Activated CD4-positive, alpha-beta T cell treated with anti-CD3 and anti-CD28 coated beads, Interleukin-2, amount 10 ng/mL, durations not matched to agents 24 days and 14 days (primary cell): ENCODE measurements at regions of chr19 and their contacts with region 1.

Region 1: DNA sequence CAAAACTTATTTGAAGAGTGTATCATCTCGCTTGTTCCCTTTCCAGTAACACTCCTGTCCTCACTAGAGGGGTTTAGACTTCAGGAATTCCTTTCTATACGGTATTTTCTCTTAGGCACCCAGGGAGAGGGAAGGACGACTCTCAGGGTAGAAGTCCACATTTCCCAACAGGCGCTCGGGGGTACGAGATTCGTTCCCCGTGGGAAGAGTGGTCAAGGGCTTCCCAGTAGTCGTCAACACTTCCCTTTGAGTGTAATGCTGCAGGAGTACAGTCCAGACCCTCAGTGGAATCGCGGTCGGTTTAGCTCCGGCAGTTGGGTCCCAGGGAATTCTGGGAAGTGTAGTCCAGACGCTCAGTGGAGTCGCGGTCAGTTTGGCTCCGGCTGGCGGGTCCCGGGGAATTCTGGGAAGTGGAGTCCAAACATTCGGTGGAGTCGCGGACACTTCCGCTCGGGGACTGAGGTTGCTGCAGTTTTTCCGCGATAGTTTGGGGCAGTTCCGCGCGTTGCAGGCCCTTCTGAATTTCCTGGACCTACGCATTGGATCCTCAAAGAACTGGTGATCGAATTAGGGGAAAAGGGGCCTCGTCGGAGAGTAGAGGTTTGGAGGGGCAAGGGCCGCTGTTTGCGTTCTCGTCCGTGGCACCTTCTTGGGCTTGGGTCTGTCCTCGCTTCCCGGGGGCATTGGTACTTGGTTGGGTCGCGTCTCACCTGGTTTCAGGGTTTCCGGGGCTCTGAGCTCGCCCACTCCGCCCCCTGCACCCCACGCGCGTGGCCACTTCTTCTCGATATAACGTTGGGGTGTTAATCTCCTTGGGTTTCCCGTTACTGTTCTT is at the start of gene ZNF224:
- DNase-seq: peak; percentile 94
- H3K4me3 Mint-ChIP-seq: peak within 1 kb of the TSS; percentile 98
- H3K27ac Mint-ChIP-seq: peak within 1 kb of the TSS; percentile 91
- H3K4me1 Mint-ChIP-seq: peaks cover 14% of the 10 kb centered on the region
- H3K27me3 Mint-ChIP-seq: no peaks in the 10 kb centered on the region
- total RNA-seq, gene ZNF224: 17.0 and 17.4 TPM in 2 replicates

Region 2: DNA sequence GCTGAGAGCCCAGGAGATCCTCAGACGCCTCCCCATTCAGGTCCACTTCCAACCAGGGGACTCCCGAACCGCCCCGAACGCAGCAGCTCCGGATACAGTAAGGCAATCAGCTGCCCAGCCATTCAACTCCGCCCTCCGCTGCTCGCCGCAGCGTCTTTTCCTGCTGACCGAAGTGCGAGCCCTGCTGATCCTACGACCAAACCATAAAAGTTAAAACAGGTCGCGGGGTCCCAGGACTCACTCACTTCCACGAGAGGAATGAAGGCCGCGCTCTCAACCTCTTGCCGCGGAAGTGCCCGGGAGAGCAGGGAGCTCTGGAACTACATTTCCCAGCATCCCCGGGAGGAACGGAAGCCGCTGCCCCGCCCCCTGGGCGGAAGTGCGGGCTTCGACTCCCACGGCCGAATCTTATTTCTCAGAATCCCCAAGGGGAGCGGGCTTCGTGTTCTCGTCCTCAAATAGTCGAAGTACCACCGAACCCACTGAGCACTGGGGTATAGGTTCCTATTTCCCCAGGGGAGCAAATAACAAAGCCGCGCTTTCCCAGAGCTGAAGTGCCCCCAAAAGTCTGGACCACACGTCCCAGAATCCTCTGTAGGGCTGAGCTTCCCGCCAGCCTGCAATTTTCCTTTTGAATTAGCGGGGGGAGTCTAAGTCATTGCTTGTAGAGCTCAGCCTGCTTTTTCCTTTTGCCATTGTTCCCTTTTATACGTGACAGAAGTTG is 159.0 kb before region 1 on chr19 and contains the start of gene ZNF45:
- intact Hi-C with region 1: loop called (anchors 1 kb)
- DNase-seq: peak; percentile 96
- H3K4me3 Mint-ChIP-seq: peak within 1 kb of the TSS; percentile 92
- H3K27ac Mint-ChIP-seq: peak within 1 kb of the TSS; percentile 94
- H3K4me1 Mint-ChIP-seq: peaks cover 10% of the 10 kb centered on the region
- H3K27me3 Mint-ChIP-seq: no peaks in the 10 kb centered on the region
- total RNA-seq, gene ZNF45: 9.4 and 10.3 TPM in 2 replicates

Region 3: GRCh38 chr19:44071824-44072542 is 22.2 kb before region 1 on chr19 and contains the start of gene ZNF284:
- intact Hi-C with region 1: loop called (anchors 1 kb)
- DNase-seq: peak; percentile 94
- H3K4me3 Mint-ChIP-seq: peak within 1 kb of the TSS; percentile 91
- H3K27ac Mint-ChIP-seq: peak within 1 kb of the TSS; percentile 73
- H3K4me1 Mint-ChIP-seq: peaks cover 13% of the 10 kb centered on the region
- H3K27me3 Mint-ChIP-seq: no peaks in the 10 kb centered on the region
- total RNA-seq, gene ZNF284: 1.2 TPM in 2 replicates

Region 4: GRCh38 chr19:44212250-44212865 is 118.2 kb after region 1 on chr19 and contains the start of gene ZNF227:
- intact Hi-C with region 1: loop called (anchors 2 kb)
- DNase-seq: peak; percentile 93
- H3K4me3 Mint-ChIP-seq: peak within 1 kb of the TSS; percentile 94
- H3K27ac Mint-ChIP-seq: peak within 1 kb of the TSS; percentile 91
- H3K4me1 Mint-ChIP-seq: peaks cover 12% of the 10 kb centered on the region
- H3K27me3 Mint-ChIP-seq: no peaks in the 10 kb centered on the region
- total RNA-seq, gene ZNF227: 17.8 and 18.8 TPM in 2 replicates